ENCODE measurements at regions of chr14 and their contacts with region 1.

Region 1: GRCh38 chr14:76918751-76919543 is 92.7 kb downstream of the LRRC74A start:
- DNase-seq: no peak
- ATAC-seq: no peak
- H3K4me3 Mint-ChIP-seq: no peak overlapping the region
- H3K27ac Mint-ChIP-seq: no peak overlapping the region
- H3K4me1 Mint-ChIP-seq: peaks cover 15% of the 10 kb centered on the region
- H3K27me3 Mint-ChIP-seq: no peaks in the 10 kb centered on the region

Region 2: DNA sequence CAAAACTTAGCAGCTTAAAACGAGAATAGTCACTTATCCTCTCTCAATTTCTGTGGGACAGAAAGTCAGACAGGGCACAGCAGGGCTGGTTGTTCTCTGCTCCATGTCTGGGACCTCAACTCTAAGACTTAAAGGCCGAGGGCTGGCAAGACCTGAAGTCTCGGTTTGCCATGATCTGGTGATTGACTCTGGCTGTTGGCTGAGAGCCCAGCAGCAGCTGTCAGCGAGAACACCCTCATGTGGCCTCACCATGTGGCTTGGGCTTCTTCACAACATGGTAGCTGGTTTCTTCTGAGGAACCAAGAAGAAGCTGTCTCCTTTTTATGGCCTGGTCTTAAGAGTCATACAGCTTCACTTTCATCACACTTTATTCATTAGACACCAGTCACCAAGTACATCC is 159.4 kb before region 1 on chr14:
- CTCF ChIA-PET with region 1: no interaction called
- DNase-seq: no peak
- ATAC-seq: no peak
- H3K4me3 Mint-ChIP-seq: no peak overlapping the region
- H3K27ac Mint-ChIP-seq: no peak overlapping the region
- H3K4me1 Mint-ChIP-seq: peaks cover 7% of the 10 kb centered on the region
- H3K27me3 Mint-ChIP-seq: peaks cover 52% of the 10 kb centered on the region

Region 3: DNA sequence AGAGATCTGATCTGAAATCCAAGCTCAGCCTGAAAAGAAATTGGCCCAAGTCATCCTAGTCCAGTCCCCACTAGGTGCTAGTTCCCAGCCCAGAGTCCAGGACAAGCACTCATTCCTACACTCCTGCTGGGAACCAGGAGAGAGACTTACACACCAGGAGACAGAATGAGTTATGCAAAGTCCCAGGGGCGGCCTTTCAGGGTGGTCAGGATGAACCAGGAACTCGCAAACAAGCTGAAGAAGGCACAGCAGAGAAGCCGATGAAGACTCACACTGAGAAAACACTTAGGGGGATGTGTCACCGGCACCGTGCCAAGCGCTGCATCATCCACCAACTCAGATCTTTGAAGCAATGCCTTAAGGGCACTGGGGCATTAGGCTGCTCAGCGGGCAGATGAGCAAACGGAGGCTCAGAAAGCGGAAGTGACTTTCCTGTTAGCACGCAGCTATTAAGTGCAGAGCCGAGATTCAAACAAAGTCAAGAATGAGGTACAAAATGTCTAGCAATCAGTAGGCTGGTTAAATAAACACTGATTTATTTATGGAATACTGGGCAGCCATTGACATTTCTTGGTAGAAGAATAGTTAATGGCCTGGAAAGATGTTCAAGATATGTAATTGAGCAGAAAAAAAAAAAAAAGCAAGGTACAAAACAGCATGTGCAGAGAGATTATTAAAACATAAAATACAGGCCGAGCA is 14.1 kb before region 1 on chr14:
- CTCF ChIA-PET with region 1: interaction called, 11 read pairs
- DNase-seq: peak; percentile 78
- ATAC-seq: peak; percentile 75
- H3K4me3 Mint-ChIP-seq: no peak overlapping the region
- H3K27ac Mint-ChIP-seq: no peak overlapping the region
- H3K4me1 Mint-ChIP-seq: peaks cover 29% of the 10 kb centered on the region
- H3K27me3 Mint-ChIP-seq: peaks cover 7% of the 10 kb centered on the region

Region 4: DNA sequence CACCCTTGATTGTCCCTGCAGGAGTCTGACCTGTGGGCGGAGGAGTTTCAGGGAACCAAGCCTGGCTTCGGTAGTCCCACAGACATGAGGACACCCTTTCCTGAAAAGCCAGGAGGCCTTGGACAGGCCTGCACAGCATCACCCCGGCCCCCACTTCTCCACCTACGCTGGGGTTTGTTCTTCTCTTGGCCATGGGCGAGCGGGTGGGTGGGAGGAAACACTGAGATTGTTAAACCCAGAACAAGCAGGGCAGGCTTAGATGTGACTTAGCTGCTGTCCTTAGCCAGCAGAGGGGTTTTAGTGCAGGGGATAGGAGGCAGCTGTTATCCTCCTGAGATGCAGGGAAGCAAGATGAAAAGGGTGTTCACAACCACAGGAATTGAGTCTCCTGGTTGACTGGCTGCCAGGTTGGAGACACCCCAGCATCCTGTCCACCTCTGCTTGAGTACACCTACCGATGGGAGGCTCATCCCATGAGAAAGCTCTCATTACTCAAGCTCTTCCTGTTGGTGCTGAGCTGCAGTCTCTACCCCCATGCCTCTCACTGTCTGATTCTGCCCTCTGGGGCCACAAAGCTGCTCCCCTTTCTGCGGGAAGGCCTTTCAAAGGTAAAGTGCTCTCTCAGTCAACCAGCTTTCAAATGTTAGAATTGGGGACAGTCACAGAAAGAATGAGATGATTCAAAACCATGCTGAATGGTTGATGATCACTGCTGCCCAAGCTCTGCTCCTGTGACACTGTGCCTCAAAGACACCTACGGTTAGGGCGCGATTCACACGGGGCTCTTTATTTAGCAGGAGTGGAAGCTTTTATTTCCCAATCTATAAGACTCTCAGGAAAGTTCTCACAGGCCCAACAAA is 23.2 kb after region 1 on chr14:
- CTCF ChIA-PET with region 1: interaction called, 18 read pairs
- DNase-seq: no peak
- ATAC-seq: no peak
- H3K4me3 Mint-ChIP-seq: no peak overlapping the region
- H3K27ac Mint-ChIP-seq: peak overlapping the region; percentile 33
- H3K4me1 Mint-ChIP-seq: peaks cover 18% of the 10 kb centered on the region
- H3K27me3 Mint-ChIP-seq: no peaks in the 10 kb centered on the region

Region 5: DNA sequence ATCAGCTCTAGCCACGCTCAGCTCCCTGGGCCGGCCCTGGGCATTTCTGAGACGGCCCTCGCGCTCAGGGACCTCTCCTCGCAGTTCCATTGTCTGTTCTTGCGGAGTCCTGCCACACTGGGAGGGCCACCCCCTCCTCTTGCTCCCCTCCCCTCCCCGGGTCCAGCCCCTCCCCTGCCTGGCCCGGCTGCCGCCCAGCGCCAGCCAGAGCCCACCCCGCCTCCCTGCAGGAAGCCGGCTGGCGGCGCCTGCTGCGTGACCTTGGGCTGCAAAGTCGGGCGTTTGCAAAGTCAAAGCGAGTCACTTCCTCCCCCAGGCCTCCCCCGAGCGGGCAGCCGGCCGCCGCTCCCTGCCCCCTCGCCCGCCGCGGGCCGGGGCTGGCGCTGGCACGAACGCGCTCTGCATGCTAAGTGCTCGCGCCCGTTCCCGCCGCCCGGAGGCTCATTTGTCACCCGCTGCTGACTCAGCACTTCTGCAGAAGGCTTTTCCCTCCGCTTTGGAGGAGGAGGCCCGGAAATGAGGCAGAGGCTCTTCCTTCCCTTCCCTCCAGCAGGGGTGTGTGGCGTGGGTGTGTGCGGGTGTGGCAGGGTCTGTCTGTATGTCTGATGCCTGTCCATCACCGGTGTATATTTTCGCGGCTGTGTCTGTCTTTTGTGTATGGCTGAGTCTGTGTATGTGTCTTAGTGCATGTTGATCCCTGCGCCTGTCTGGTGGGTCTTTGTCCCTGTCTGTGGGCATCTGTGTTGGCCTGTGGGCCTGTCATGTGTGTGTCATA is 37.6 kb after region 1 on chr14:
- CTCF ChIA-PET with region 1: interaction called, 19 read pairs
- DNase-seq: peak; percentile 95
- ATAC-seq: peak; percentile 67
- H3K4me3 Mint-ChIP-seq: peak overlapping the region; percentile 70
- H3K27ac Mint-ChIP-seq: peak overlapping the region; percentile 91
- H3K4me1 Mint-ChIP-seq: peaks cover 74% of the 10 kb centered on the region
- H3K27me3 Mint-ChIP-seq: no peaks in the 10 kb centered on the region

Region 6: DNA sequence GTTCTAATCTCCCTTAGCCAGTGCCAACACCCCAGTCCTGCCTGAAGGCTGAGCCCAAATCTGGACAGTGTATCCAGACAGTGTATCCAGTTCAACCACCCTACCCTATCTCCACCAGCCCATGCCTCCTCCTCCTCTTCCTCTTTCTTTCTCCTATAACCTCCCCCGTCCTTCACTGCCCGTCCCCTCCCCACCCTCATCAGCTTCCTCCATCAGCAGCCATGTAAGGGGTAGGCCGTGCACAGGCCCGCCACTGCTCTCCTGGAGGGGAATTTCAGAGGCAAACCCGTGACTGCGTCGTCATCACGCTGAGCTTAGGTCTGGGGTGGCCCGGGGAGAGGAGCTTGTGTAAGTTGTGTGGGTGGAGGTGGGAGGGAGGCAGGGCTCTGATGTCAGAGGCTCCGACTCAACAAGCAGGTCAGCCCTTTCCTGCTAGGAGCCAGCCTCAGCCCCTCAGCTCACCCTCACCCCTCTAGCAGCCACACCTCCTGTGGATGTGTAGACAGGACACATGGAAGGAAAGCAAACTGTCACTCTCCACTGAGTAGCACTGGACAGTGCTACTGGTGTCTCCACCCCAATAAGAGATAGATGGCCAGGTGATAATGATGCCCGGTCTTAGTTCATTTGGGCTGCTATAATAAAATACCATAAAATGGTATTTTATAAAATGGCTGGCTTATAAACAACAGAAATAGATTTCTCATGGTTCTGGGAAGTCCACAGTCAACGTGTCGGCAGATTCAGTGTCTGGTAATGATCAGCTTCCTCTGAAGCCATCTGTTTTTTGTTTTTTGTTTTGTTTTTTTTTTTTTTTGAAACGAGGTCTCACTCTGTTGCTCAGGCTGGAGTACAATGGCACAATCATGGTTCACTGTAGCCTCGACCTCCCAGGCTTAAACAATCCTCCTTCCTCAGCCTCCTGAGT is 59.1 kb after region 1 on chr14:
- CTCF ChIA-PET with region 1: interaction called, 15 read pairs
- DNase-seq: peak; percentile 85
- ATAC-seq: peak; percentile 94
- H3K4me3 Mint-ChIP-seq: no peak overlapping the region
- H3K27ac Mint-ChIP-seq: peak overlapping the region; percentile 77
- H3K4me1 Mint-ChIP-seq: peaks cover 15% of the 10 kb centered on the region
- H3K27me3 Mint-ChIP-seq: peaks cover 4% of the 10 kb centered on the region

Region 7: DNA sequence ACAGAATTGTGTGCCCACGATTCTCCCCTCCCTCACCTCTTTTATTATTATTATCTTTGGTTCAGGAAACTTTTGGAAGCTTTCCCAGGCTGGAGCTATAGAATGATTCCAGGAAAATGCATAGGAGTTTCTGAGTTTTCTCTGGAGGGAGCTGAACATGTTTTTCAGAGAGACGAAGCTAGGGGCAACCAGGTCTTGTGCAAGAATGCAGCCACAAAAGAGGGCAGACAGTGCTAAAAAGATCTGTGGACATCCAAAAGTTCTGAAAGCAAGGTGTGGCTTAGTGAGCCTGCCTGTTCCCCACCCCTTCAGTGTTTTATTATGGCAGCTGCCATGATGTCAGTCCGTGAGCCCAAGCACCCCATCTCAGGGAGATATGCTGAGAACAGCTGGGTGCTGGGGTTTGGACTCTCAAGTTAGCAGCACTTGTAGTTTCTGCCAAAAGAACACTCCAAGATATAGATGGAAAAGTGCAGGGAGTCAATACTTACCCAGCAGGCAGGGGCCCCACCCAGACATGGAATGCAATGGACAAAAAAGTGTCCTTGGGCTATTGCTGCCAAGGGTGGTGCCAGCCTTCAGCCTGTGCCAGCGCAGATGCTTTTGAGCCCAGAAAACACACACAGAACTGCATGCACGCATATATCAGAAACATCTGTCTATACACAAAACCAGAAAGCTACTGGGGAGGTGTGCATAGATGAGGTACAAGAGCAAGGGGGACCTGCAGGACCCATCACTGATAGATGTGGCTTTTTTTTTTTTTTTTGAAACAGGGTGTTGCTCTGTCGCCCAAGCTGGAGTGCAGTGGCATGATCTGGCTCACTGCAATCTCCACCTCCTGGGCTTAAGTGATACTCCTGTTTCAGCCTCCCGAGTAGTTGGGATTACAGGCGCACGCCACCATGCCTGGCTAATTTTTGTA is 126.6 kb after region 1 on chr14:
- CTCF ChIA-PET with region 1: interaction called, 123 read pairs
- DNase-seq: no peak
- ATAC-seq: no peak
- H3K4me3 Mint-ChIP-seq: no peak overlapping the region
- H3K27ac Mint-ChIP-seq: no peak overlapping the region
- H3K4me1 Mint-ChIP-seq: peaks cover 55% of the 10 kb centered on the region
- H3K27me3 Mint-ChIP-seq: no peaks in the 10 kb centered on the region

Region 8: DNA sequence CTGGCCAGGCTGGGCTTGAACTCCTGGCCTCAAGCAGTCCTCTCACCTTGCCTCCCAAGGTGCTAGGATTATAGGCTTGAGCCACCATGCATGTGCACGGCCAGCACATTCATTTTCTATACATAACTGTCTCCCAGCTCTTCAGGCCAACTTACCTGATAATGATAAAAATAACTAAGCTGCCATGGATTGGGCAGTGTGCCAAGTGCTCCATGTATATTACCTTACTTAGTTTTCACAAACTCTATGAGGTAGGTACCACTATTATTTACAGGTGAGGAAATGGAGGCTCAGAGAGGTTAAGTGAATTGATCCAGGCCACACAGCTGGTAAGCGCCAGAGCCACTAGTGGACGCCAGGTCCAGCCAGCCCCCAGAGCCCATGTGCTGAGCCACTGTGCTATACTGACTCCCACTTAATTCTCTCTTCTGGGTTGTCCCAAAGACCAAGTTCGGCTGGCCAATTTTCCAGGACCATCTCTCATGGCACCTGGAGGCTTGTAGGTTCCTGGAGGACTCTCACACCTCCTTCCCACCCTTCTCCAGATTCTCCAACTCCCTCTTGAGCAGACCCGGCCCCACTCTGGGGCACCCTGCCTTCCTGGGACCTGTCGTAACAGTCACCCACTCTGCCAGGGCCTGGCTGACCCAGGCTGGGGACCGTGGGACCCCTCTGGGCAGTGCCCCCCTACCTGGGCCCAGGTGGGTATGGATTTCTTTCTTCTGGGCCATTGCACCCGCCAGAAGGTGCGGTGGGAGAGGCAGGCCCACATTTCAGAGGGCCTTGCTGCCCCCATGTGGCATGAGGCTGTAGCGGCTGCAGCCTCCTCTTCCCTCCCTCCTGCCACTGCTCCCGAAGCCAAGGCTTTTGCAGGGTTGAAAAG is 148.9 kb after region 1 on chr14:
- CTCF ChIA-PET with region 1: interaction called, 221 read pairs
- DNase-seq: peak; percentile 68
- ATAC-seq: peak; percentile 68
- H3K4me3 Mint-ChIP-seq: no peak overlapping the region
- H3K27ac Mint-ChIP-seq: no peak overlapping the region
- H3K4me1 Mint-ChIP-seq: peaks cover 5% of the 10 kb centered on the region
- H3K27me3 Mint-ChIP-seq: peaks cover 18% of the 10 kb centered on the region

Measured in activated CD8-positive, alpha-beta memory T cell treated with anti-CD3 and anti-CD28 coated beads, Interleukin-2, amount 10 ng/mL, durations not matched to agents 7 days and 5 days (primary cell).